Sigmoid colon (tissue), 7 donors: ENCODE measurements at regions of chr7 and their contacts with region 1.

Region 1: DNA sequence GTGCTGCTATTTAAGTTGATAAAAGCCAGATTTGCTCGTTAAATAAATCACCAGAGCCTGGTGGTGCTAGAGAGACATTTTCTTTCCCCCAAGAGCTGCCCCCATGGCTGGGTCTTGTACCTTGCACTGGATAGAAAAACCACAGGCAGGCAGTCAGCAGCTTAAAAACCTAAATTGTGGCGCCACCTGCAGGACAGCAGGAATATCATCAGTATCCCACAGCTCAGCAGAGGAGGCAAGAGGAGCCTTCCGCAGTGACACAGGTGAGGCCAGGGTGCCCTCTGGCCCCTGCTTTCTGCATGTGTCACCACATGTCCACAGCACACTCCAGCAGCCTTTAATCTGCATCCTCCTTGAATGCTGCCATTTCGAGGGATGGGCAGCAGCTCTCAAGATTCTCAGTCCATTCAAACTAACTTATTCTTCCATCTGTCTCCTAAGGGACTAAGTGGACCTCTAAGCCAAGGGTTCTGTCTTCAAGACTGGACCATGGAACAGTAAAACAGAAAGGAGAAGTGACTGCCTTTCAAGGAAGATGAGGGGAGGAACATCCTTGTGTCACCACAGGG is 4.5 kb upstream of the PLXNA4 start:
- DNase-seq: peak; percentile 86
- H3K4me3 ChIP-seq: no peak overlapping the region
- H3K27ac ChIP-seq: no peak overlapping the region
- H3K4me1 ChIP-seq: peaks cover 0 to 18% (median 14%) of the 10 kb centered on the region in 4 donors
- H3K27me3 ChIP-seq: peaks cover 0 to 9% (median 0%) of the 10 kb centered on the region in 3 donors
- CTCF ChIP-seq: peak; percentile 74 to 82 (median 79)
- EP300 ChIP-seq: no peak
- POLR2A ChIP-seq: no peak

Region 2: DNA sequence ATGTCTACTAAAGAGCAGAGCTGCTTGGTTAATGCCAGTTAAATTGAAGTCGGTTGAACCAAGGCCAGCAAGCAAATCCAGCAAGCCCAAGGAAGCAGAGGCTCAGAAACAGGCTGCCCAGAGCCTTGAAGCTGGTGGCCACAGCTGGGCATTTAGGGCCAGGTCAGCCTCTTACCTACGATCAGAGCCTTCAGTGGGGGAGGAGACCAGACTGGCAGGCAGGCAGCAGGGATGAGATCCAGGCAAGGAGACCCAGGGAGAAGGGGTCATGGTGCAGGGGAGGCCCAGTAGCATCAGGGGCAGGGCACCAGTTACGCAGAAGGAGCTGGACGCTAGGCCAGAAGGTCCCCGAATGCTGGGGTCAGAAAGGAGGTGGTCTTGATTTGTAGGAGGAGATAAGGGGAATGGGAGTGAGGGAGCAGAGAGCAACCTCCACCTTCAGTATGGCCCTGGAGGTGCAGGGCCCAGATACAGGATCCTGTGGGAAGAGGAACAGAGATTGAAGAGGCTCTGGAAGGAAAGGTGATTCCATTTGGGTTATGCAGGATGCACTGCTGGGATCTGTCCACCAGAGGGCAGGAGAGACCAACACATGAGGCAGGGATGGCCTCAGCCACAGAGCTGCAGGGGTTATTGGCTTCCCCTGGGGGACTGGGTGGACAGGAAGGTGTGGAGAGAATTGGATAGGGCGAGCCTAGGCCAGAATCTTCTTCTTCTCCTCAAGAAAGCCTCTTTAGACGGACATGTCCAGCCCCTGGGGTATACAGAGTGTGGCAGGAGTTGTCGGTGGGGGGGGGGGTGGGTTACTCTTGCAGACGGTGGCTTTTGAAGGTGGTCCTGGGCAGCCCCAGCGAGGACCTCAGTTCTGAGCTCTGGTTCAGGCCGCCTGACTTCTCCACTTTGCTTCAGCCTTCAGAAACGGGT is 891.8 kb before region 1 on chr7:
- intact Hi-C with region 1: loop called (anchors 2 kb)
- DNase-seq: peak; percentile 79
- H3K4me3 ChIP-seq: no peak overlapping the region
- H3K27ac ChIP-seq: no peak overlapping the region
- H3K4me1 ChIP-seq: peaks cover 0 to 10% (median 3%) of the 10 kb centered on the region in 4 donors
- H3K27me3 ChIP-seq: peaks cover 0 to 45% (median 13%) of the 10 kb centered on the region in 3 donors
- CTCF ChIP-seq: peak; percentile 80 to 98 (median 88)
- EP300 ChIP-seq: no peak
- POLR2A ChIP-seq: no peak

Region 3: GRCh38 chr7:131945313-131945911 is 635.4 kb before region 1 on chr7:
- intact Hi-C with region 1: loop called (anchors 2 kb)
- DNase-seq: no peak
- H3K4me3 ChIP-seq: peak overlapping the region in 3 of 4 donors; percentile 12 to 32 (median 26)
- H3K27ac ChIP-seq: no peak overlapping the region
- H3K4me1 ChIP-seq: peaks cover 0 to 15% (median 9%) of the 10 kb centered on the region in 4 donors
- H3K27me3 ChIP-seq: peaks cover 0 to 14% (median 6%) of the 10 kb centered on the region in 3 donors
- CTCF ChIP-seq: peak; percentile 29 to 92 (median 84)
- EP300 ChIP-seq: no peak
- POLR2A ChIP-seq: no peak

Region 4: DNA sequence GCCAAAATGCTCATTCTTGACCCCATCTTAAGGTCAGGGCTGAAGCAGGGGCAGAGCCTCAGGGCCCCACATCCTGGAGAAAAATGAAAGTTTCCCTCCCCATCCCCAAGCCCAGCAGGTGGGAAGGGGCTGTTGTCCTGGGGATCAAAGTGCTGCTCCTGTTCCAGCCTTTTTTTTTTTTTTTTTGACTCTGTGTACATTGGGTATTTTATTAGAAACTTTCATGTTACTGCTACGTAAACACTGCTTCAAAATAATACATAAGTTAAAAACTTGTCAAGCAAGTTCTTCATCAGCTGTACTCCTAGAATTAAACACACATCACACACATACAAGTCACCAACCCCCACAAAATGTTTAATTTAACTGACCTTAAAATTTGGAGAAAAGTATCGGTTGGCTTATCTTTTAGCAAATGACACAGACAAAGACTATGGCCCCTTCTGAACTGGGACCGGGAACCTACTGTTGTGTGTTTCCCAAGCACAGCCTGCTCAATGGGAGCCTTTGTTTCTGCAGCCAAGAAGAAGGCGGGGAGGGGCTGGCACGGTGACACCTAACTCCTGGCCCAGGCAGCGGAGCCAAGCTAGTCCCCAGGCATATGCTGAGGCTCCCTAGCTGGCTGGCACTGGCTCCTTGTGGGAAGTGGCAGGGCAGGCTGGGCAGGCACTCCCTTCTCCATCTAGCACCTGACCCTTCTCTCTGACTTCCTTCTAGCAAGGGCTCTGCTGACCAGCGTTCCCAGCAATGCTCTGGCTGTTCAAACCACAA is 329.7 kb before region 1 on chr7:
- intact Hi-C with region 1: loop called (anchors 5 kb)
- DNase-seq: peak; percentile 92
- H3K4me3 ChIP-seq: no peak overlapping the region
- H3K27ac ChIP-seq: peak overlapping the region in 3 of 4 donors; percentile 60 to 82 (median 69)
- H3K4me1 ChIP-seq: peaks cover 0 to 47% (median 43%) of the 10 kb centered on the region in 4 donors
- H3K27me3 ChIP-seq: no peaks in the 10 kb centered on the region
- CTCF ChIP-seq: no peak
- EP300 ChIP-seq: no peak
- POLR2A ChIP-seq: no peak

Region 5: DNA sequence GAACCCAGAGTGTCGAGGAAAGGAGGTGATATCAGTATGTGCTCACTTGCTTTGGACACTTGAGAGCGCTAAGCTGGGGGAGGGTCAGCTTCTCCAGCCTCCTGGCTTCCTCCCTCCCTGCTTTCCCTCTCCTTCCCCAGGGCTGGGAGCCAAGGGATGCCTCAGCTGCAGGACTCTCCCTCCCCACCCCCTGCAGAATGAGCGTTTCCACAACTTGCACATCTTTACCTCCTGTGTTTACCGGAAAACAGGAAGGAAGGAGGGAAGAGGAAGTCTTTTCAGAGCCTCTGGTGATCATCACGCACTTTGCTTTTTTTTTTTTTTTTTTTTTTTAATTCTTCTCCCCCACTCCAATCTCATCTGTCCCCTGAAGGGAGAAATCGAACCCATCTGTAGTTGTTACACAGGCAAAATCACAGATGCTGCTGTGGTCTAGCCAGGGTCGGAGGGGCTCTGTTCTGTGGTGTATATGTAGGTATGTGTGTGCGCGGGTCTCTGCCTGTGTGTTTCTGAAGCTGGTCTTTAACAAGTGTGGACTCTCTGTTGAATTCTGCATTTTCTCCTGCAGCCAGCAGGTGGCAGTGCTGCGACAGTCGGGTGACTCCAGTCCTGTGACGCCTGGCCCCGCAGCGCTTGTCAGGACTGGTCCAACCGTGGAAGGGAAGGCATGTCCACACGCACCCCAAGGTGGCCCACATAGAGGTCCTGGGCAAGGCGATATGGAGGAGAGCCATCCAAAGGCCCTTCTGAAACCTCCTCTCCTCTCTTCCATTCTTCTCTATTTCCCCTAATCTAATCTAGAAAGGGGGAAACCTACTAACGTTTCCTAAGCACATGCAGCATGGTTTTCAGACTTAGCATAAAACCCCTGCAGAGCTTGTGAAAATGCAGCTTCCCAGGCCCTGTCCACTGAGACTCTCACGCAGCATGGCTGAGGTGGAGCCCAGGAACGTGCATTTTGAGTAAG is 262.2 kb before region 1 on chr7:
- intact Hi-C with region 1: loop called (anchors 1 kb)
- DNase-seq: peak; percentile 92
- H3K4me3 ChIP-seq: no peak overlapping the region
- H3K27ac ChIP-seq: no peak overlapping the region
- H3K4me1 ChIP-seq: peaks cover 0 to 13% (median 12%) of the 10 kb centered on the region in 4 donors
- H3K27me3 ChIP-seq: peaks cover 0 to 23% (median 0%) of the 10 kb centered on the region in 3 donors
- CTCF ChIP-seq: peak; percentile 73 to 94 (median 84)
- EP300 ChIP-seq: no peak
- POLR2A ChIP-seq: no peak

Region 6: DNA sequence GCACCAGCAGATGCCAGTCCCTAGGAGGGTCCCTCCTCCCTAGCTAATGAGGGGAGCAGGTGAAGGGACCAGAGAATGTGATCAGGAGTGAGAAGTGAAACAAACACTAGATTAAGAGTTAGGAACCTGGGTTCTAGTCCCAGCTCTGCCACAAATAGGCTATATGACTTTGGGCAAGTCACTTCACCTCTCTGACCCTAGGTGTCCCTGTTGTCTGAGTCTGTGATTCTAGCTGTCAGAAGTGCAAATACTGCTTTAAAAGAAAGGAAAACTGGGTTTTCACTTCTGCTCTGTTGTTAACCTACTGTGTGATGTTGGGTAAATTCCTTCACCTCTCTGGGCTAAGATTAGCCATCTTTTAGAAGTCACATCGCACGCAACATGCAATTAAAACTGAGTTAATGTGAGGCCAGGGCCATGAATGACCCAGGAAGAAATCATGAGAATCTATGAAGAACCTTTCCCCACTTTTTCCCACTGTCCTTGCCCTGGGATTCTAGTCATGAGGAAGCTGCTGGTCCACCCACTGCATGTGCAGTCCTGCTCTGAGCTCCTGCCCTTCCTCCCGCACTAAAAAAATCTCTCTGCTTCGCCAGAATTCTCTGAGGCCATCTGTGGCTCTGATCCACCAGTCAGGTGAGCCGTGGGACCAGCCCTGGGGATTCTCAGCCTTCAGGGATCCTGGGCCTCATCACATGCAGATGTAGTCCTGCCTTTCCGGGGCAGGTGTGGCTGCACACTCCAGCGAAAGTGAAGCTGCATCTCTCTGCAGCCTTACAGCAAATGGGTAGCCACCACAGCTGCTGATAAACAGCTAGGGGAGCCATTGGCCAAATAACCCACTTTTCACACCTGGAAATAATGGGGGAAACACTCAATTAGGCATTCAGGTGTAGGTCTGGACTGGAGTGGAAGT is 186.3 kb before region 1 on chr7:
- intact Hi-C with region 1: loop called (anchors 5 kb)
- DNase-seq: no peak
- H3K4me3 ChIP-seq: no peak overlapping the region
- H3K27ac ChIP-seq: peak overlapping the region; percentile 53 to 75 (median 64)
- H3K4me1 ChIP-seq: peaks cover 0 to 27% (median 16%) of the 10 kb centered on the region in 4 donors
- H3K27me3 ChIP-seq: no peaks in the 10 kb centered on the region
- CTCF ChIP-seq: no peak
- EP300 ChIP-seq: peak in 1 of 4 donors; percentile 26
- POLR2A ChIP-seq: no peak

Region 7: DNA sequence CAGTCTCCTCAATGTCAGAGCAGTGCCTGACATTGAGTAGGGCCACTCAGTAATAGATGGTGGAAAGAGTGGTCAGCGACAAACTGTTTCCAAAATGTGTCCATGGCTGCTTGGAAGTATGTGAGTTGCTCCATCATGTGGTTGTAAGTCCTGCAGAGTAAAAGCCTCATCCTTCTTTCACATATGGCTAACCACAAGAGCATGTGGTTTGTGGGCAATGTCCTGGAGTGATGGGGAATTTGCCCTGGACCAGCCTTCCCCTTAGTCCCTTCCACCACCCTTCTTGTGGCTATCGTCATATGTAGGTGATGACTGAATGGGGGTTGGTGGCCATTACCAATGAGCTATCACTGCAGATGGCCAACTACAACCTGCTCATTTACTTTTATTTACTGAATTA is 28.4 kb after region 1 on chr7:
- intact Hi-C with region 1: no loop called
- DNase-seq: no peak
- H3K4me3 ChIP-seq: no peak overlapping the region
- H3K27ac ChIP-seq: no peak overlapping the region
- H3K4me1 ChIP-seq: peaks cover 0 to under 1% (median 0%) of the 10 kb centered on the region in 4 donors
- H3K27me3 ChIP-seq: no peaks in the 10 kb centered on the region
- CTCF ChIP-seq: no peak
- EP300 ChIP-seq: no peak
- POLR2A ChIP-seq: no peak